ENCODE measurements at regions of chr3 and their contacts with region 1.

Region 1: GRCh38 chr3:37456270-37456708 is 281.9 kb upstream of the LRRFIP2 start:
- DNase-seq: peak; percentile 92
- H3K4me3 ChIP-seq: peak overlapping the region; percentile 28
- H3K27ac ChIP-seq: peak overlapping the region; percentile 53
- H3K4me1 ChIP-seq: peaks cover 57% of the 10 kb centered on the region
- H3K27me3 ChIP-seq: no peaks in the 10 kb centered on the region
- CTCF ChIP-seq: no peak

Region 2: GRCh38 chr3:37779289-37780152 is 323.2 kb after region 1 on chr3:
- CTCF ChIA-PET with region 1: no interaction called
- POLR2A ChIA-PET with region 1: no interaction called
- intact Hi-C with region 1: loop called (anchors 5 kb)
- DNase-seq: peak; percentile 67
- H3K4me3 ChIP-seq: no peak overlapping the region
- H3K27ac ChIP-seq: no peak overlapping the region
- H3K4me1 ChIP-seq: no peaks in the 10 kb centered on the region
- H3K27me3 ChIP-seq: no peaks in the 10 kb centered on the region
- CTCF ChIP-seq: peak; percentile 61